ENCODE measurements at regions of chr1 and their contacts with region 1.

Region 1: DNA sequence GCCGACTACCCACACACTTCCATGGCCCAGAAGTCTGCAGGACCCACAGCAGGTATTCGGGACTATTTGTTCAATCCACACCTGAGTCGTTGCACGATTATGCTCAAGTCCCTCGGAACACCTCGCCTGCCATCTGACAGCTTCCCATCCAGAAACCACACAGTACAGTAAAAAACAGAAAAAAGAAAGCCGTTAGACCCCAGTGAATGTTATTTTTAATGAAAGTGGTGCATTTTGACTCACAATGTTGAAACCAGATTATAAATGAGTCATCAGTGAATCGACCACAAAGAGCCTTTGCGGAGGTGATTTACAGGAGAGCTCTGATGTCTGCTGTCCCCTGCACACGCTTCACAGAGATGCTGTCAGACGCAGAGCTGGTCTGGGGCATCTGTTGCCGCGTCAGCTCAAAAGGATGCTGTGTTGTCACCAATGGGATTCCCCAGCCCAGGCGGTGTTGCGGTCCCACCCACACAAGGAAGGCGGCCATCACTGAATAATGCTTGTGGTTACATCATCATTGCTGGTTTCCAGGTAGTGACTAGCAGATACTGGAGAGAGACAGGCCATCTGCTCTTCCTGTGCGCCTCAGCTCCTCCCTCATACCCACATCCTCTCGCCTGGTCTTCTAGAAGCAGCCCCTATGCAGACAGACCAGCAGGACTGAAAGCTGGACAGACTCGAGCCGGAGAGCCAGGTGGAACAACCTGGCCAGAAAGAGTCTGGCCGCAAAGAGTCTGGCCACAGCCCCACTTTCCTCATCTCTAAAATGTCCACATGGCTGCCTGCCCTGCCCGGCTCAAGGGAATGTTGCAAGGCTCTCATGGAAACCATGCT is 116.8 kb downstream of the TOMM20 start:
- DNase-seq: peak; percentile 76 to 80
- ATAC-seq: peak; percentile 62 to 91 (median 72)
- H3K4me3 ChIP-seq: no peak overlapping the region
- H3K27ac ChIP-seq: peak overlapping the region; percentile 41
- H3K4me1 ChIP-seq: no peaks in the 10 kb centered on the region
- H3K27me3 ChIP-seq: no peaks in the 10 kb centered on the region
- CTCF ChIP-seq: no peak

Region 2: GRCh38 chr1:234955107-234955731 is 56.6 kb before region 1 on chr1:
- intact Hi-C with region 1: no loop called
- DNase-seq: peak; percentile 68 to 79
- ATAC-seq: peak; percentile 51 to 68 (median 64)
- H3K4me3 ChIP-seq: no peak overlapping the region
- H3K27ac ChIP-seq: peak overlapping the region; percentile 63
- H3K4me1 ChIP-seq: peaks cover 36% of the 10 kb centered on the region
- H3K27me3 ChIP-seq: no peaks in the 10 kb centered on the region
- CTCF ChIP-seq: no peak

Region 3: DNA sequence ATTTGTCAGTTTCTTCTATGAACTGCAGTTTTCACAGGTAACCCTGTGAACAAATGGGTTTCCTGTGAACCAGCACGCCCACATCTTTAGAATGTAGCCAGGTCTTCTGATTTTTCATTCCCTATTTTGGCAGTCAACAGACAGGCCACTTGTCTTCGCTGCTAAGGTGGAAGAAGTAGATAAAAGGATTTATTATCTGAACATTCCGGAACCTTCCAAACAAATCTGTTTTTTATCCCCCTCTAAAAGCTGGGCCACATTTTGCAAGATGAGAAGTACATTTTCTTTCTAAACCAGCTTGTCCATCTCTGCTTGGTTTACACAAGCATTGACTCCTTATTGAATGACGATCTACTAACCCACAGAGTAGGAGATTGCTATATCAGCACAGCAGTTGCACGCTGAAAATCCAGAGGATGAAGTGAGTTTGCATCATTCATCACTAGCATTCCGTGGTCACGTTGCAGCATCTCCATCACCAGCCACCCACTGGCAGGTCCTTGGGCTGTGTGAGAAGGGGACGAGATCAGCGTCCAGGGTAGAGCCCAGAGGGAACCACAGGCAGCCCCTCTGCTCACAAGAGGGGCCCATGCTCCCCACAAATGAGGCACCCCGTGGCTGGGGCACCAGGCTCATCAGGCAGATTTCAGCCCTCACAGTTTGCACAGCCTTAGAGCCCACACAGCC is 33.4 kb after region 1 on chr1:
- intact Hi-C with region 1: loop called in 1 of 2 experiments (anchors 5 kb)
- DNase-seq: no peak
- ATAC-seq: no peak
- H3K4me3 ChIP-seq: no peak overlapping the region
- H3K27ac ChIP-seq: no peak overlapping the region
- H3K4me1 ChIP-seq: peaks cover 24% of the 10 kb centered on the region
- H3K27me3 ChIP-seq: no peaks in the 10 kb centered on the region
- CTCF ChIP-seq: no peak